H1 (cell line): ENCODE measurements at regions of chr5 and their contacts with region 1.

Region 1: DNA sequence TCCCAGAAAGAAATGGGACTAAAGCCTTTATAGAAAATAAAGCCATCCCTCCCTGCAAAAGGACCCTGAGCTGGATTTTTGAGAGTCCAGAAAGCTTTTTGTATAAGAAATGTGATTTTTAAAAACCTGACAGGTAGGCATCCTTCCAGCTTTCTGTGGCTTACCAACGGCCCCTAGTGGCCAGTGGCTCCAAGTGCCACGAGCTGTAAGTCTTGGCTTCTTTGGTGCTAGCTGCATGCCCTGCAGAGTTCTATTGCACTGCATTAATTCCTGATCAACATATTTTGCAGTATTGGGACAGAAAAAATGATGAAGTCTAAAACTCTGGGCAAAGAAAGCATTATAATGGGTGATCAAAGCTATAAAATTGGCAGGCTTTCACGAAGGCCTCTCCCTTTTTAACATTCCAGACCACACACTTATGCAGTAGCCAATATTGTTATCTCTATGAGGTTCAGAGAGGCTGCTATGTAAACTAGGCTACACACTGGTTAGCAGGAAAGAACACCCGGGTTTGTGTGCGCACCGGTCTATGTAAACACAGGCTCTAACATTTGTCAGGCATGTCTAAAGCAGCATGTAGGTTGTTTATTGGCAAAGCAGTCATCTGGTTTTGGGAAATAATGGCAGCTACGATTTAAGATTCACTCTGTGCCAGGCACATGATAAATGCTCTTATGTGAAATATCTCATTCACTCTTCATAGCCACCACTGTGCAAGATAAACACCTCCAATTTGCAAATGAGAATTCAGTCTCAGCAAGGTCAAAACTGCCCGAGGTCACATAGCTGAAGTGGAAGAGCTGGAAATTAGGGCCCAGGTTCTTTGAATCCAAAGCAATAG is 55.2 kb downstream of the NMUR2 start:
- DNase-seq: peak; percentile 17 to 70
- H3K4me3 ChIP-seq: no peak overlapping the region
- H3K27ac ChIP-seq: no peak overlapping the region
- H3K4me1 ChIP-seq: no peaks in the 10 kb centered on the region
- H3K27me3 ChIP-seq: peaks cover 0 to 1% (median 0%) of the 10 kb centered on the region in 4 experiments; a peak in 1 of 7 replicates
- CTCF ChIP-seq: peak; percentile 82 to 90 (median 89)
- EP300 ChIP-seq: no peak
- POLR2A ChIP-seq: no peak
- RAD21 ChIP-seq: peak; percentile 90 to 93

Region 2: GRCh38 chr5:151825445-151825844 is 524.5 kb before region 1 on chr5:
- CTCF ChIA-PET with region 1: interaction called, 37 read pairs
- POLR2A ChIA-PET with region 1: interaction called, 3 read pairs
- DNase-seq: peak; percentile 13 to 72
- H3K4me3 ChIP-seq: no peak overlapping the region
- H3K27ac ChIP-seq: no peak overlapping the region
- H3K4me1 ChIP-seq: peaks cover 0 to 4% (median 1%) of the 10 kb centered on the region in 4 experiments; a peak in 3 of 7 replicates
- H3K27me3 ChIP-seq: no peaks in the 10 kb centered on the region
- CTCF ChIP-seq: peak; percentile 52 to 91 (median 82)
- EP300 ChIP-seq: no peak
- POLR2A ChIP-seq: no peak
- RAD21 ChIP-seq: peak; percentile 99 to 100

Region 3: GRCh38 chr5:152084476-152084875 is 265.4 kb before region 1 on chr5:
- CTCF ChIA-PET with region 1: no interaction called
- POLR2A ChIA-PET with region 1: no interaction called
- DNase-seq: no peak
- H3K4me3 ChIP-seq: no peak overlapping the region
- H3K27ac ChIP-seq: no peak overlapping the region
- H3K4me1 ChIP-seq: no peaks in the 10 kb centered on the region
- H3K27me3 ChIP-seq: no peaks in the 10 kb centered on the region
- CTCF ChIP-seq: no peak
- EP300 ChIP-seq: no peak
- POLR2A ChIP-seq: no peak
- RAD21 ChIP-seq: no peak

Region 4: GRCh38 chr5:152271420-152271819 is 78.5 kb before region 1 on chr5:
- CTCF ChIA-PET with region 1: interaction called, 15 read pairs
- POLR2A ChIA-PET with region 1: no interaction called
- DNase-seq: no peak
- H3K4me3 ChIP-seq: no peak overlapping the region
- H3K27ac ChIP-seq: no peak overlapping the region
- H3K4me1 ChIP-seq: no peaks in the 10 kb centered on the region
- H3K27me3 ChIP-seq: no peaks in the 10 kb centered on the region
- CTCF ChIP-seq: peak; percentile 18 to 77 (median 67)
- EP300 ChIP-seq: no peak
- POLR2A ChIP-seq: no peak
- RAD21 ChIP-seq: peak; percentile 89 to 92

Region 5: DNA sequence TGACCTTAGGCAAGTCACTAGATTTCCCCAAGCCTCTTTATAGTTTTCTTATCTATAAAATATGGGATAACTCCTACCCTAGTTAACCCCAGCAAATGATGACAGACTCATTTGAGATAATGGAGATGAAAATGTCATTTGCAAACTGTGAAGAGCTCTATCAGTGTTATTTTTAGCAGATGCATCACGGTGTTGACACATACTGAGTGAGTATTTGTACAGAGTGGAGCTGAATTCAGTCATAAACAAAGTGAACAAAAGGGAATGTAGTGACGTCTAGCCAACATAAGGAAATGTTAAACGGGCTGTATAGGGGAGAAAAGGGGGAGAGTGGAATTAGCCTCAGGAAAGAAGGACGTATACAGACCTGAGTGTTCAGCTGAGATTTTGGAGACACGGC is 20.7 kb before region 1 on chr5:
- CTCF ChIA-PET with region 1: interaction called, 38 read pairs
- POLR2A ChIA-PET with region 1: no interaction called
- DNase-seq: no peak
- H3K4me3 ChIP-seq: no peak overlapping the region
- H3K27ac ChIP-seq: no peak overlapping the region
- H3K4me1 ChIP-seq: no peaks in the 10 kb centered on the region
- H3K27me3 ChIP-seq: no peaks in the 10 kb centered on the region
- CTCF ChIP-seq: no peak
- EP300 ChIP-seq: no peak
- POLR2A ChIP-seq: no peak
- RAD21 ChIP-seq: no peak

Region 6: GRCh38 chr5:152364899-152365298 is 15.0 kb after region 1 on chr5:
- CTCF ChIA-PET with region 1: interaction called, 20 read pairs
- POLR2A ChIA-PET with region 1: no interaction called
- DNase-seq: no peak
- H3K4me3 ChIP-seq: no peak overlapping the region
- H3K27ac ChIP-seq: no peak overlapping the region
- H3K4me1 ChIP-seq: no peaks in the 10 kb centered on the region
- H3K27me3 ChIP-seq: no peaks in the 10 kb centered on the region
- CTCF ChIP-seq: no peak
- EP300 ChIP-seq: no peak
- POLR2A ChIP-seq: no peak
- RAD21 ChIP-seq: no peak

Region 7: DNA sequence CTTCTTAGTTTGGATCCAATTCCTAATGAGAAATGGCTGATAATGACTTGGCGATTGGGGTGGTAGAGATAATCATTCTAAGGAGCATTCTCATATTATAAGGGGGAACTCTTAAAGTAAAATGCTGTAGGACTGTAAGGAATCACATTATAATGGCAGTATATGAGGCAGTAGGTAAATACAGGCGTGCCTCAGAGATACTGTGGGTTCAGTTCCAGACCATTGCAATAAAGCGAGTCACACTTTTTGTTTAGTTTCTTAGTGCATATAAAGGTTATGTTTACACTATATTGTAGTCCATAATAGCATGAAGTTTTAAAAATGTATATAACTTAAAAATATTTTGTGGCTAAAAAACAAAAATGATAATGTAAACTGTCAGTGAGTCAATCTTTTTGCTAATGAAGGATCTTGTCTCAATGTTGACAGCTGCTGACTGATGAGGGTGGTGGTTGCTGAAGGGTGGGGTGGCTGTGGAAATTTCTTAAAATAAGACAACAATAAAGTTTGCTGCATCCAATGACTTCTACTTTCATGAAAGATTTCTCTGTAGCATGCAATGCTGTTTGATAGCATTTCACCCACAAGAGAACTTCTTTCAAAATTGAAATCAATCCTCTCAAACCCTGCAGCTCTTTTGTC is 39.4 kb after region 1 on chr5:
- CTCF ChIA-PET with region 1: interaction called, 13 read pairs
- POLR2A ChIA-PET with region 1: no interaction called
- DNase-seq: no peak
- H3K4me3 ChIP-seq: no peak overlapping the region
- H3K27ac ChIP-seq: no peak overlapping the region
- H3K4me1 ChIP-seq: no peaks in the 10 kb centered on the region
- H3K27me3 ChIP-seq: no peaks in the 10 kb centered on the region
- CTCF ChIP-seq: no peak
- EP300 ChIP-seq: no peak
- POLR2A ChIP-seq: no peak
- RAD21 ChIP-seq: no peak

Region 8: DNA sequence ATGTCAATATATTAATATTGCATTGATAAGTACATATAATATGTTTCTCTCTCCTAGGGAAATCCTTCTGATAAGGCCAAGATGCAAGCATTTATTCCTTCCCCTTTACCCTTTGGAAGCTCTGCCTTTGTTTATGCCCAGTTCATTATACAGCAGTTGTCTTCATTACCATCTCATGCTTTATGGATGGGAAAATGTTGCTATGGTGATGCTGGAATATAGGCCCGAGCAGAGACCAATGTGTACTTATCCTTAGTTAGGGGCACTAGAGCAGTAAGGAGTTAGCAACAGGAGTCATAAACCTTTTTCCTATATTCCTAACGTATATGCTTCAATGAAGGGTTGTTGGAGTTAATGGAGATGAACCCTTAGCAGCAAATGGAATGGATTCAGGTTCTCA is 74.6 kb after region 1 on chr5:
- CTCF ChIA-PET with region 1: no interaction called
- POLR2A ChIA-PET with region 1: no interaction called
- DNase-seq: no peak
- H3K4me3 ChIP-seq: no peak overlapping the region
- H3K27ac ChIP-seq: no peak overlapping the region
- H3K4me1 ChIP-seq: no peaks in the 10 kb centered on the region
- H3K27me3 ChIP-seq: no peaks in the 10 kb centered on the region
- CTCF ChIP-seq: no peak
- EP300 ChIP-seq: no peak
- POLR2A ChIP-seq: no peak
- RAD21 ChIP-seq: no peak

Region 9: GRCh38 chr5:152514827-152515397 is 165.0 kb after region 1 on chr5:
- CTCF ChIA-PET with region 1: interaction called, 12 read pairs
- POLR2A ChIA-PET with region 1: no interaction called
- DNase-seq: no peak
- H3K4me3 ChIP-seq: no peak overlapping the region
- H3K27ac ChIP-seq: no peak overlapping the region
- H3K4me1 ChIP-seq: no peaks in the 10 kb centered on the region
- H3K27me3 ChIP-seq: no peaks in the 10 kb centered on the region
- CTCF ChIP-seq: peak in 2 of 3 experiments; percentile 19 to 32; a peak in 2 of 4 replicates
- EP300 ChIP-seq: no peak
- POLR2A ChIP-seq: no peak
- RAD21 ChIP-seq: peak; percentile 49 to 53